A673 (cell line): ENCODE measurements at regions of chr11 and their contacts with region 1.

Region 1: GRCh38 chr11:67270256-67271056 is 4.2 kb downstream of the GRK2 start:
- DNase-seq: peak; percentile 93
- H3K4me3 ChIP-seq: peak overlapping the region; percentile 32
- H3K27ac ChIP-seq: peak overlapping the region; percentile 83
- H3K4me1 ChIP-seq: peaks cover 85% of the 10 kb centered on the region
- H3K27me3 ChIP-seq: no peaks in the 10 kb centered on the region
- CTCF ChIP-seq: no peak

Region 2: DNA sequence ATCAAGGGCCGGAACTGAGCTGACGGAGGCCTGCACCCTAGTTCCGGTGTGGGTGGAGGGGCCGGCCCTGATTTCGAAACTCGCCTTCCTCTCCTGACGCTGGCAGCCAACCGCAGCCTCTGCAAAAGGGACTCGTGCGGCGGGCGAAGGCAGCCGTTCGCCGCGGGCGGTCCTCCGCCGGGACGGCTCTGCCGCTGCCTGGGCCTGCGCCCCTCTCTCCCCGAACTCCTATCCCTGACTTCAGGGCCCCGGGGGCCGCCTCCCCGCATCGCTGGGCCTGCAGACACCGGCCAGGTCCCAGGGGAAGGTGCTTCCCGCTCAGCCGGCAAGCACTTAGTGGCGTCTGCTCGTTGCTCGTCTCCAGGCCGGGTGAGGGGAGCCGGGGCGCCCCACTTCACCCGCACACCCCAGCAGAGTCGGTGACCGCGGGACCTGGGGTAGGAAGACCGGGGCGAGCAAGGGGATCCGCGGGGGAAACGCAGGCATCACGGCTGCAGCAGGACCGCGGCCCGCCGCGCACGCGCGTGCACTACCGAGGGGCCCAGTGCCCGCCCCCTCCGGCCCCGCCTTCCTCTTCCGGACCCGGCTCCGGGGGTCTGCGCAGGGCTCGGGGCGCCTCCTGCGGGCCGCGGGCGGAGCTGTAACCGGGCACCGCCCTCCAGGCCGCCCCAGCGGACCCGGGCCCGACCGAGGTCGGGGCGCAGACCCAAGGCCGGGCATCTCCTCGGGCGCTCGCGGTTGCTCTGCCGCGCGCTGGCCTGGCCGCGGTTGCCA is 18.2 kb after region 1 on chr11:
- CTCF ChIA-PET with region 1: no interaction called
- POLR2A ChIA-PET with region 1: no interaction called
- intact Hi-C with region 1: loop called (anchors 2 kb)
- DNase-seq: peak; percentile 95
- H3K4me3 ChIP-seq: peak overlapping the region; percentile 75
- H3K27ac ChIP-seq: peak overlapping the region; percentile 96
- H3K4me1 ChIP-seq: peaks cover 31% of the 10 kb centered on the region
- H3K27me3 ChIP-seq: no peaks in the 10 kb centered on the region
- CTCF ChIP-seq: peak; percentile 41; the same call in 1 of the 2 replicates

Region 3: GRCh38 chr11:67295846-67296245 is 25.4 kb after region 1 on chr11:
- CTCF ChIA-PET with region 1: no interaction called
- POLR2A ChIA-PET with region 1: interaction called, 10 read pairs
- intact Hi-C with region 1: no loop called
- DNase-seq: no peak
- H3K4me3 ChIP-seq: no peak overlapping the region
- H3K27ac ChIP-seq: no peak overlapping the region
- H3K4me1 ChIP-seq: peaks cover 11% of the 10 kb centered on the region
- H3K27me3 ChIP-seq: no peaks in the 10 kb centered on the region
- CTCF ChIP-seq: no peak